Activated CD4-positive, alpha-beta memory T cell treated with anti-CD3 and anti-CD28 coated beads for 36 hours (primary cell): ENCODE measurements at regions of chr19 and their contacts with region 1.

Region 1: DNA sequence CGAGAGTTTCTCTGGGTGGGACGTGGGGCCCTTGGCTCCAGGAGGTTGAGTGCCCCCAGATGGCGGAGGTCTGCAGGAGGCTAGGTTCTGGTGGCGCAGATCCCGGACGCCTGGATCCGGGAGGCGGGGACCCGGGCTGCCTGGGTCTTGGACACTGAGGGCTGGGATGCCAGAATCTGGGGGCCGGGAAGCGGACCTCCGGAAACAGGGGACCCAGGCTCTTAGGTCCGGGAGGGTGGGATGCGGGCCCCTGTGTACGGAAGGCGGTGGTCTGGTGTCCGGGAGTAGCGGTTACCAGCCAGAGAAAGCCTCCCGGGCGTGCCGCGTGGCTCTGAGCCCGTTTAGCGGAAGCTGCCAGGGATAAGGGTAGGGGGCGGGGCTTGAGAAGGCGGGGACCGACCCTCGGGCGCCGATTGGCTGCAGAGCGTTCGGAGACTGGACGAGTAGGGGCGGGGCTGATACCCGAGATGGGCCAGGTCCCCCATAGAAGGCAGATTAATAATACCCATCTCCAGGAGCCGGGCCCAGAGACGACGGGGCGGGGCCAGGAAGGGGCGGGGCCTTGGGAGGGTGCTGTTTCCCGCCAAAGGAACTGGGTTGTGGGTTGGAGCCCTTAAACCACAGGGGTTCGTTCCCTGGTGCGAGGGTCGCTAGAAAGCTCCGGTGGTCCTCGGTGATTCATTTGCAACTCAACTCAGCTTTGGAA is at the start of gene SLC1A5:
- DNase-seq: peak; percentile 99
- H3K4me3 Mint-ChIP-seq: peak within 1 kb of the TSS; percentile 95
- H3K27ac Mint-ChIP-seq: peak within 1 kb of the TSS; percentile 99
- H3K4me1 Mint-ChIP-seq: peaks cover 38% of the 10 kb centered on the region
- H3K27me3 Mint-ChIP-seq: no peaks in the 10 kb centered on the region
- total RNA-seq, gene SLC1A5: 202 to 205 TPM

Region 2: GRCh38 chr19:46232029-46232428 is 556.4 kb before region 1 on chr19:
- CTCF ChIA-PET with region 1: no interaction called
- POLR2A ChIA-PET with region 1: no interaction called
- intact Hi-C with region 1: no loop called
- DNase-seq: no peak
- H3K4me3 Mint-ChIP-seq: no peak overlapping the region
- H3K27ac Mint-ChIP-seq: no peak overlapping the region
- H3K4me1 Mint-ChIP-seq: no peaks in the 10 kb centered on the region
- H3K27me3 Mint-ChIP-seq: peaks cover 38% of the 10 kb centered on the region

Region 3: GRCh38 chr19:46600384-46601317 is 187.8 kb before region 1 on chr19:
- CTCF ChIA-PET with region 1: interaction called, 3 read pairs
- POLR2A ChIA-PET with region 1: interaction called, 19 read pairs
- intact Hi-C with region 1: no loop called
- DNase-seq: peak; percentile 97
- H3K4me3 Mint-ChIP-seq: peak overlapping the region; percentile 95
- H3K27ac Mint-ChIP-seq: peak overlapping the region; percentile 100
- H3K4me1 Mint-ChIP-seq: peaks cover 26% of the 10 kb centered on the region
- H3K27me3 Mint-ChIP-seq: no peaks in the 10 kb centered on the region

Region 4: GRCh38 chr19:46746281-46747013 is 42.0 kb before region 1 on chr19 and contains the start of gene STRN4:
- CTCF ChIA-PET with region 1: interaction called, 6 read pairs
- POLR2A ChIA-PET with region 1: interaction called, 6 read pairs
- intact Hi-C with region 1: loop called (anchors 5 kb)
- DNase-seq: peak; percentile 66
- H3K4me3 Mint-ChIP-seq: peak within 1 kb of the TSS; percentile 94
- H3K27ac Mint-ChIP-seq: peak within 1 kb of the TSS; percentile 83
- H3K4me1 Mint-ChIP-seq: peaks cover 49% of the 10 kb centered on the region
- H3K27me3 Mint-ChIP-seq: no peaks in the 10 kb centered on the region
- total RNA-seq, gene STRN4: 52.6 to 59.3 TPM

Region 5: DNA sequence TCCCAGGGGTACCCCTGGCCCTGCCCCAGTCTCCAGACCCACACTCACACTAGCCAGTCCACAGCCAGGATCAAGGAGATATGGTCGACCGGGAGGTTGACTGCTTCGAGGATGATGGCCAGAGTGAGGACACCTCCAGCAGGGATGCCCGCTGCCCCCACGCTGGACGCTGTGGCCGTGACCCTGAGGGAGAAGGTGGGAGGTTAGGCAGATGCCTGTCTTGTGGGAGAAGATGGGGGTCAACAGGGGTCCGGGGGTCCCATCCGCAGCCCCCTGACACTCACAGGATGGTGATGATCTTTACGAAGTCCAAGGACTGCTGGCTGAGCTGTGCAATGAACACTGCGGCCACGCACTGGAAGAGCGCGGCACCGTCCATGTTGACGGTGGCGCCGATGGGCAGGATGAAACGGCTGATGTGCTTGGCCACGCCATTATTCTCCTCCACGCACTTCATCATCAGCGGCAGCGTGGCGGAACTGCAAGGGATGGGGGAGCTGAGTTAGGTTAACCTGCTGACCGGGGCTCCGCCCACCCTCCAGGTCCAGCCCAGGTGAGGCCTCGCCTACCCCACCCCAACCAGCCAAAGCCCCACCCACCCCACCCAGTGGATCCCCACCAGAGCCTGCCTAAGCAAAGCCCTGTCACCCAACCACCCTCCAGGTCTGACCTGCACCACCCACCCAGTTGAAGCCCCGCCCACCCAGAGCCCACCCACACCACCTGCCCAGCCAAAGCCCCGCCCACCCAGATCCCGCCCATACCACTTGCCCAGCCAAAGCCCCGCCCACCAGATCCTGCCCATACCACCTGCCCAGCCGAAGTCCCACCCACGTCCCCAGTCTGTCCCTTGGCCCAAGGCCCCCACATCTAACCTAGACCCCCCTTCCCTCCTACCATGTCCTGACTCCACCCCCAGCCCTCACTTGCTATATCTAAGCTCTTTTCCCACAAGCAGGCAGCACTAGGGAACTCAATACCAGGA is 11.2 kb before region 1 on chr19:
- CTCF ChIA-PET with region 1: no interaction called
- POLR2A ChIA-PET with region 1: interaction called, 10 read pairs
- intact Hi-C with region 1: no loop called
- DNase-seq: peak; percentile 34
- H3K4me3 Mint-ChIP-seq: no peak overlapping the region
- H3K27ac Mint-ChIP-seq: peak overlapping the region; percentile 33
- H3K4me1 Mint-ChIP-seq: peaks cover 12% of the 10 kb centered on the region
- H3K27me3 Mint-ChIP-seq: no peaks in the 10 kb centered on the region

Region 6: GRCh38 chr19:46840136-46840942 is 51.9 kb after region 1 on chr19:
- CTCF ChIA-PET with region 1: interaction called, 16 read pairs
- POLR2A ChIA-PET with region 1: interaction called, 4 read pairs
- intact Hi-C with region 1: no loop called
- DNase-seq: peak; percentile 65
- H3K4me3 Mint-ChIP-seq: no peak overlapping the region
- H3K27ac Mint-ChIP-seq: peak overlapping the region; percentile 38
- H3K4me1 Mint-ChIP-seq: peaks cover 2% of the 10 kb centered on the region
- H3K27me3 Mint-ChIP-seq: no peaks in the 10 kb centered on the region

Region 7: GRCh38 chr19:46954993-46955812 is 166.8 kb after region 1 on chr19:
- CTCF ChIA-PET with region 1: interaction called, 3 read pairs
- POLR2A ChIA-PET with region 1: interaction called, 3 read pairs
- intact Hi-C with region 1: loop called (anchors 2 kb)
- DNase-seq: peak; percentile 46
- H3K4me3 Mint-ChIP-seq: peak overlapping the region; percentile 75
- H3K27ac Mint-ChIP-seq: peak overlapping the region; percentile 82
- H3K4me1 Mint-ChIP-seq: peaks cover 79% of the 10 kb centered on the region
- H3K27me3 Mint-ChIP-seq: no peaks in the 10 kb centered on the region

Region 8: DNA sequence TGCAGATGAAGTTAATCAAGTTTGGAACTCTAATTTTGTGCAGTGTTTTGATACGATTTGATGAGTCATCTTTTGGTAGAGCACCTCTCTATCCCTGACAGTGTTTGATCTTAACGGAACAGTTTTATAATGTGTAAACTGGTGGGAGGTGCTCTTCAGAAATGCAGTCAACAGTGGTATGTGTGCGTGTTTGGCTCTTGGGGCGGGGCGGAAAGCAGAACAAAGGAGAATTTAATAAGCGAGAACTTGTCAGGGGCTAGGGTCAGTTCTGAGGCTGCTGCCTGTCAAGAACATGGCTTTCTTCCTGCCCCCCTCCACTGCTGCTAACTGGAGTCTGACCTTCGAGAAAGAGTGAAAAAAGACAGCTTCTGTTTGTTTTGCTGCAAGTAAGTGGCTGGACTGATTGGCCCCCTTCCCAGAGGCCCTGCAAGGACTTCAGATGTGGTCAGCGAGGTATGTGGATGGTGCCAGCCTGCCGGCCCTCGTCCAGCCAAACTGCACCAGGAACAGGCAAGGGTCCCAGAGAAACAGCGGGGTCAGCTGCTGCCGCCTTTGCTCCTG is 401.8 kb after region 1 on chr19:
- CTCF ChIA-PET with region 1: no interaction called
- POLR2A ChIA-PET with region 1: no interaction called
- intact Hi-C with region 1: loop called (anchors 1 kb)
- DNase-seq: peak; percentile 84
- H3K4me3 Mint-ChIP-seq: peak overlapping the region; percentile 58
- H3K27ac Mint-ChIP-seq: peak overlapping the region; percentile 68
- H3K4me1 Mint-ChIP-seq: peaks cover 65% of the 10 kb centered on the region
- H3K27me3 Mint-ChIP-seq: no peaks in the 10 kb centered on the region